Dorsolateral prefrontal cortex (tissue), 120 donors: ENCODE measurements at regions of chr1 and their contacts with region 1.

Region 1: GRCh38 chr1:173714759-173715537 is at the start of gene KLHL20:
- DNase-seq: peak; percentile 53 to 86 (median 76)
- H3K4me3 ChIP-seq: peak within 1 kb of the TSS; percentile 66 to 99 (median 88)
- H3K27ac ChIP-seq: peak within 1 kb of the TSS; percentile 5 to 95 (median 85)
- H3K27me3 ChIP-seq: peaks cover 0 to 19% (median 0%) of the 10 kb centered on the region in 45 donors
- CTCF ChIP-seq: peak in 41 of 56 donors; percentile 1 to 54 (median 27)
- total RNA-seq, gene KLHL20: 17.8 to 32.2 (median 24.3) TPM

Region 2: GRCh38 chr1:173429471-173430402 is 285.2 kb before region 1 on chr1:
- intact Hi-C with region 1: loop called in 1 of 2 experiments (anchors 10 kb)
- DNase-seq: peak; percentile 14 to 91 (median 81)
- H3K4me3 ChIP-seq: peak overlapping the region in 57 of 59 donors; percentile 2 to 56 (median 40)
- H3K27ac ChIP-seq: peak overlapping the region in 58 of 59 donors; percentile 23 to 89 (median 80)
- H3K27me3 ChIP-seq: no peaks in the 10 kb centered on the region
- CTCF ChIP-seq: peak; percentile 52 to 84 (median 72)

Region 3: GRCh38 chr1:173771560-173771959 is 56.6 kb after region 1 on chr1:
- intact Hi-C with region 1: loop called in 1 of 2 experiments (anchors 5 kb)
- DNase-seq: no peak
- H3K4me3 ChIP-seq: no peak overlapping the region
- H3K27ac ChIP-seq: no peak overlapping the region
- H3K27me3 ChIP-seq: no peaks in the 10 kb centered on the region
- CTCF ChIP-seq: no peak

Region 4: GRCh38 chr1:173824331-173825081 is 109.6 kb after region 1 on chr1 and contains the starts of genes CENPL and DARS2:
- intact Hi-C with region 1: loop called (anchors 5 kb)
- DNase-seq: peak; percentile 85 to 97 (median 95)
- H3K4me3 ChIP-seq: peak within 1 kb of the TSS; percentile 61 to 98 (median 86)
- H3K27ac ChIP-seq: peak within 1 kb of the TSS; percentile 1 to 96 (median 89)
- H3K27me3 ChIP-seq: no peaks in the 10 kb centered on the region
- CTCF ChIP-seq: peak in 38 of 56 donors; percentile 5 to 53 (median 34)
- total RNA-seq, gene CENPL: 2.4 to 10.9 (median 5.3) TPM
- total RNA-seq, gene DARS2: 7.0 to 13.9 (median 9.8) TPM

Region 5: GRCh38 chr1:173900427-173900826 is 185.5 kb after region 1 on chr1:
- intact Hi-C with region 1: no loop called
- DNase-seq: no peak
- H3K4me3 ChIP-seq: no peak overlapping the region
- H3K27ac ChIP-seq: no peak overlapping the region
- H3K27me3 ChIP-seq: no peaks in the 10 kb centered on the region
- CTCF ChIP-seq: no peak